Activated CD8-positive, alpha-beta T cell treated with anti-CD3 and anti-CD28 coated beads for 36 hours (primary cell): ENCODE measurements at regions of chr1 and their contacts with region 1.

Region 1: DNA sequence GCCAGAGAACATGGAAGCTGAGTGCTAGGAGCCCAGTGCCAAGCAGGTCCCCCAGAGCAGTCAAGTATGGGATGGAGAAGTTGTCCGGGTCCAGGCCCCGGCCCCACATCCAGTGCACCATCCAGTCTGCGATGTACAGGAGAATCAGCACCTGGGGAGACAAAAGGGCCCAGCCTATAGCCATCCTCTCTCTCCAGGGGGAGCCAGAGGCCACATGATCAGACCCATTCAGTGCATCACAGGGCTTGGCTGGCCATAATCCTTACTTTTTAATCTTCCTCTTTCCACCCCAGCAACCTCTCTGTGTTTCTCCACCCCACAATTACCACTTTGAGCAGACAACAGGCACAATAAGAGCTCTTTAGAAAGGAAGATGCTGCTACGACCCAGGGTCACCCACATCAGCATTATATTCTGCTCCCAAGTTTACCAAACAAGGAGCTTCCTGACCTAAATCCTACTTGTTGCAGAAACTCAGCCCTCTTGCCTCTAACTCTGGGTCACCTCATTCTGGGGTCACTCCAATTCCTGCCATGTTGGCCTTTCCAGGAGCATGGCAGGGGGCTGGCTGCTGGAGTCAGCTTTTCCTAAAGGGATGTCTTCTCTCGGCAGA is 16.4 kb upstream of the RAB29 start:
- DNase-seq: peak; percentile 77
- ATAC-seq: peak; percentile 95
- H3K4me3 Mint-ChIP-seq: no peak overlapping the region
- H3K27ac Mint-ChIP-seq: no peak overlapping the region
- H3K4me1 Mint-ChIP-seq: no peaks in the 10 kb centered on the region
- H3K27me3 Mint-ChIP-seq: no peaks in the 10 kb centered on the region
- CTCF ChIP-seq: peak; percentile 87

Region 2: DNA sequence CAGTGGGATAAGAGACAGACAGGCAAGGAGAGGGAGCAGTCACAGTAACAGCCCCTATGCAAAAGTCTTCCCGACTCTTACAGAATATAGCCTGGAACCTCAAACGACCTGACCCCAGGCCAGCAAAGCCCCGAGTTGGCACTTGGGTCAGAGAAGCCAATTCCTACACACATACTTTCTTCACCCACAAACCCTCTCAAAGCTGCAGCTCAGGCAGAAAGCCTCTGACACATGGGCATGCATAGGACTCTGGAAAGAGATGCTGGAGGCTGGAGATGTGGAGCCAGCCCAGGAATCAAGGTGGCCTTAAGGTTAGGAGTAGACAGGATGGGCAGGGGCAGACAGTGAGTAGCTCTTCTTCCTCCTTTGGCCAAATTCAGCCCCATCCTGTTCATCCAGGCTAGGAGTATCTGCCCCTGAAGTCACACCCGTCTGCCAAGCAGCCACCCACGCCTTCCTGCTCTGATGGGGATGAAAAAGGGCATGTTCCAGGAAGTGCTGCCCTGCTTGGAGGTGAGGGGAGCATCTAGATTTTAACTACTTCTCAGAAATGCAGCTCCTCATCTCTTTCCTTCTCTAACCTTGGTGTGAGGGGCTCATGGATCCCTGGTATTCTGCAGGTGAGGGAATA is 13.5 kb after region 1 on chr1:
- CTCF ChIA-PET with region 1: interaction called, 20 read pairs
- POLR2A ChIA-PET with region 1: interaction called, 6 read pairs
- intact Hi-C with region 1: no loop called
- DNase-seq: peak; percentile 84
- ATAC-seq: peak; percentile 92
- H3K4me3 Mint-ChIP-seq: peak overlapping the region; percentile 69
- H3K27ac Mint-ChIP-seq: peak overlapping the region; percentile 93
- H3K4me1 Mint-ChIP-seq: peaks cover 59% of the 10 kb centered on the region
- H3K27me3 Mint-ChIP-seq: no peaks in the 10 kb centered on the region
- CTCF ChIP-seq: no peak

Region 3: DNA sequence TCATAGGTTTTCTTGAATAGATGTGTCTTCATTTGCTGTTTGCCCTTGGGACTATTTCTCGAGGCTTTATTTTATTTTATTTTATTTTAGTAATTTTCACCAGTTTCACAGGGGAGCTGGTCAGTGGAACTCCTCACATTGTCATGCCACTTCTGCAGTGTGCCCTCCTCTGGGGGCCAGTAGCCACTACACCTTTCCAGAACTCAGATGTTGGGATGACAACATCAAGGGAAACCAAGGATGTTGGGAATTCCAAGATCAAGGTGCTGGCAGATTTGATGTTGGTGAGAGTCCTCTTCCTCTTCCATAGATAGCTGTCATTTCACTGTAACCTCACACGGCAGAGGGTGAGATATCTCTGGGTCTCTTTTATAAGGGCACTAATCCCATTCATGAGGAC is 116.1 kb after region 1 on chr1:
- CTCF ChIA-PET with region 1: interaction called, 12 read pairs
- POLR2A ChIA-PET with region 1: no interaction called
- intact Hi-C with region 1: loop called (anchors 5 kb)
- DNase-seq: no peak
- ATAC-seq: no peak
- H3K4me3 Mint-ChIP-seq: no peak overlapping the region
- H3K27ac Mint-ChIP-seq: no peak overlapping the region
- H3K4me1 Mint-ChIP-seq: no peaks in the 10 kb centered on the region
- H3K27me3 Mint-ChIP-seq: no peaks in the 10 kb centered on the region
- CTCF ChIP-seq: no peak

Region 4: GRCh38 chr1:205919026-205919746 is 127.5 kb after region 1 on chr1:
- CTCF ChIA-PET with region 1: interaction called, 17 read pairs
- POLR2A ChIA-PET with region 1: no interaction called
- intact Hi-C with region 1: no loop called
- DNase-seq: peak; percentile 88
- ATAC-seq: peak; percentile 95
- H3K4me3 Mint-ChIP-seq: no peak overlapping the region
- H3K27ac Mint-ChIP-seq: no peak overlapping the region
- H3K4me1 Mint-ChIP-seq: no peaks in the 10 kb centered on the region
- H3K27me3 Mint-ChIP-seq: no peaks in the 10 kb centered on the region
- CTCF ChIP-seq: peak; percentile 84

Region 5: GRCh38 chr1:205983925-205984725 is 192.5 kb after region 1 on chr1:
- CTCF ChIA-PET with region 1: interaction called, 14 read pairs
- POLR2A ChIA-PET with region 1: no interaction called
- intact Hi-C with region 1: no loop called
- DNase-seq: peak; percentile 59
- ATAC-seq: peak; percentile 77
- H3K4me3 Mint-ChIP-seq: no peak overlapping the region
- H3K27ac Mint-ChIP-seq: no peak overlapping the region
- H3K4me1 Mint-ChIP-seq: no peaks in the 10 kb centered on the region
- H3K27me3 Mint-ChIP-seq: no peaks in the 10 kb centered on the region
- CTCF ChIP-seq: peak; percentile 46